CD4-positive, alpha-beta memory T cell (primary cell): ENCODE measurements at regions of chr4 and their contacts with region 1.

Region 1: GRCh38 chr4:72302981-72303704 is 265.9 kb downstream of the ADAMTS3 start:
- DNase-seq: peak; percentile 35 to 42 (median 39)
- H3K4me3 ChIP-seq: no peak overlapping the region
- H3K4me3 Mint-ChIP-seq: no peak overlapping the region
- H3K27ac ChIP-seq: no peak overlapping the region
- H3K27ac Mint-ChIP-seq: no peak overlapping the region
- H3K4me1 ChIP-seq: no peaks in the 10 kb centered on the region
- H3K4me1 Mint-ChIP-seq: no peaks in the 10 kb centered on the region
- H3K27me3 ChIP-seq: no peaks in the 10 kb centered on the region
- H3K27me3 Mint-ChIP-seq: no peaks in the 10 kb centered on the region

Region 2: GRCh38 chr4:70601422-70602039 is 1701.6 kb before region 1 on chr4:
- CTCF ChIA-PET with region 1: interaction called, 13 read pairs
- POLR2A ChIA-PET with region 1: no interaction called
- intact Hi-C with region 1: no loop called
- DNase-seq: peak; percentile 61 to 65 (median 64)
- H3K4me3 ChIP-seq: no peak overlapping the region
- H3K4me3 Mint-ChIP-seq: no peak overlapping the region
- H3K27ac ChIP-seq: no peak overlapping the region
- H3K27ac Mint-ChIP-seq: no peak overlapping the region
- H3K4me1 ChIP-seq: no peaks in the 10 kb centered on the region
- H3K4me1 Mint-ChIP-seq: no peaks in the 10 kb centered on the region
- H3K27me3 ChIP-seq: no peaks in the 10 kb centered on the region
- H3K27me3 Mint-ChIP-seq: peaks cover 2 to 6% of the 10 kb centered on the region in 2 donors

Region 3: DNA sequence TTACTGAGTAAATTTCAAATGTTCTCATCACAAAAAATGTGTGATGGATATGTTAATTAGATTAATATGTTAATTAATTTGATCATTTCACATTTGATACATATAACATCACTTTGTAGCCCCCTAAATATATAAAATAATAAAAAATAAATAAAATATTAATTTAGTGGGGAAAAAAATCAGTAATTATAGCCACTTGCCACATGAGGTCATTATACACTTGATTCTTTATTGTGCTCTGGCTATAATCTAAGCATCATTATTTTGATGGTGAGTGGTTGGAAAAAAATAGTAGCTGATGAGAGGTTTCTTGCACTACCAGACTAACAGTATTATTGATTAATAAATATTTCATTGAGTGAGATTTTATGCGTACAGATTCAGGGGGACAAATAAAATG is 1252.3 kb before region 1 on chr4:
- CTCF ChIA-PET with region 1: no interaction called
- POLR2A ChIA-PET with region 1: no interaction called
- intact Hi-C with region 1: loop called (anchors 10 kb)
- DNase-seq: peak in 1 of 5 donors; percentile 1
- H3K4me3 ChIP-seq: no peak overlapping the region
- H3K4me3 Mint-ChIP-seq: no peak overlapping the region
- H3K27ac ChIP-seq: no peak overlapping the region
- H3K27ac Mint-ChIP-seq: no peak overlapping the region
- H3K4me1 ChIP-seq: no peaks in the 10 kb centered on the region
- H3K4me1 Mint-ChIP-seq: no peaks in the 10 kb centered on the region
- H3K27me3 ChIP-seq: no peaks in the 10 kb centered on the region
- H3K27me3 Mint-ChIP-seq: no peaks in the 10 kb centered on the region

Region 4: DNA sequence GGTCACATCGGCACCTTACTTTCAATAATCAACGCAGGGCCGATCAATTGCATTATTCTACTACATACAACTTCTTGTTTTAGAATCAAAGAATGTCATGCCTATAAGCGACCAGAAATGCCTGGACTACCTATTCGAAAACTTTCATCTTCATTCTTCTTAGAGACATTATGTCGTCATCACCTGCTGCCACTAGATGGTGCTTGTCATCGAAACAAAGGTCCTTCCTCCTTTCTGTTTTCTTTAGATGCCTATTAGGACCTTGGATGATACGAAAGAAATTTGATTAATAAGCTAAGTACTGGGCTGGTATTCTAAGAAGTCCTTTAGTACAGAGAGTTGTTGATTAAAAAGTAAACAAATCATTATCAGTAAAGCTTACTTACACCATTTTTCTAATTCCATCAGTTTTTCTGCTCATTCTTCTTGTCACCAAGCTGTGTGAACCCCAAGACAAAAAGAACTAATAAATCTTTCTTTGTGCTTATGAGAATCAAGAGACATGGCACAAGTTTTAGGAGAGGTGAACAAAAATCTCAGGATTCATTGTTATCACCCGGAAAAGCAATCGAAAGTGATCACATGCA is 1118.9 kb before region 1 on chr4:
- CTCF ChIA-PET with region 1: no interaction called
- POLR2A ChIA-PET with region 1: no interaction called
- intact Hi-C with region 1: loop called (anchors 1 kb)
- DNase-seq: peak; percentile 36 to 55 (median 47)
- H3K4me3 ChIP-seq: no peak overlapping the region
- H3K4me3 Mint-ChIP-seq: peak overlapping the region in 1 of 8 donors; percentile 53
- H3K27ac ChIP-seq: no peak overlapping the region
- H3K27ac Mint-ChIP-seq: peak overlapping the region in 2 of 7 donors; percentile 2 to 49
- H3K4me1 ChIP-seq: peaks cover 21% of the 10 kb centered on the region
- H3K4me1 Mint-ChIP-seq: peaks cover 16 to 34% (median 23%) of the 10 kb centered on the region in 4 donors
- H3K27me3 ChIP-seq: peaks cover 13% of the 10 kb centered on the region
- H3K27me3 Mint-ChIP-seq: peaks cover 12 to 26% of the 10 kb centered on the region in 2 donors

Region 5: GRCh38 chr4:71270901-71271300 is 1032.2 kb before region 1 on chr4:
- CTCF ChIA-PET with region 1: interaction called, 3 read pairs
- POLR2A ChIA-PET with region 1: no interaction called
- intact Hi-C with region 1: loop called (anchors 2 kb)
- DNase-seq: peak in 4 of 5 donors; percentile 6 to 19 (median 14)
- H3K4me3 ChIP-seq: no peak overlapping the region
- H3K4me3 Mint-ChIP-seq: no peak overlapping the region
- H3K27ac ChIP-seq: no peak overlapping the region
- H3K27ac Mint-ChIP-seq: no peak overlapping the region
- H3K4me1 ChIP-seq: peaks cover 13% of the 10 kb centered on the region
- H3K4me1 Mint-ChIP-seq: peaks cover 9 to 19% (median 13%) of the 10 kb centered on the region in 4 donors
- H3K27me3 ChIP-seq: no peaks in the 10 kb centered on the region
- H3K27me3 Mint-ChIP-seq: no peaks in the 10 kb centered on the region